ENCODE measurements at regions of chr12 and their contacts with region 1.

Region 1: GRCh38 chr12:67315661-67316060 is 46.5 kb downstream of the CAND1 start:
- DNase-seq: no peak
- H3K4me3 ChIP-seq: no peak overlapping the region
- H3K4me3 Mint-ChIP-seq: no peak overlapping the region
- H3K27ac ChIP-seq: no peak overlapping the region
- H3K27ac Mint-ChIP-seq: peak overlapping the region in 1 of 8 donors; percentile 43
- H3K4me1 ChIP-seq: no peaks in the 10 kb centered on the region
- H3K4me1 Mint-ChIP-seq: peaks cover 7 to 22% (median 19%) of the 10 kb centered on the region in 3 donors
- H3K27me3 ChIP-seq: no peaks in the 10 kb centered on the region
- H3K27me3 Mint-ChIP-seq: no peaks in the 10 kb centered on the region

Region 2: DNA sequence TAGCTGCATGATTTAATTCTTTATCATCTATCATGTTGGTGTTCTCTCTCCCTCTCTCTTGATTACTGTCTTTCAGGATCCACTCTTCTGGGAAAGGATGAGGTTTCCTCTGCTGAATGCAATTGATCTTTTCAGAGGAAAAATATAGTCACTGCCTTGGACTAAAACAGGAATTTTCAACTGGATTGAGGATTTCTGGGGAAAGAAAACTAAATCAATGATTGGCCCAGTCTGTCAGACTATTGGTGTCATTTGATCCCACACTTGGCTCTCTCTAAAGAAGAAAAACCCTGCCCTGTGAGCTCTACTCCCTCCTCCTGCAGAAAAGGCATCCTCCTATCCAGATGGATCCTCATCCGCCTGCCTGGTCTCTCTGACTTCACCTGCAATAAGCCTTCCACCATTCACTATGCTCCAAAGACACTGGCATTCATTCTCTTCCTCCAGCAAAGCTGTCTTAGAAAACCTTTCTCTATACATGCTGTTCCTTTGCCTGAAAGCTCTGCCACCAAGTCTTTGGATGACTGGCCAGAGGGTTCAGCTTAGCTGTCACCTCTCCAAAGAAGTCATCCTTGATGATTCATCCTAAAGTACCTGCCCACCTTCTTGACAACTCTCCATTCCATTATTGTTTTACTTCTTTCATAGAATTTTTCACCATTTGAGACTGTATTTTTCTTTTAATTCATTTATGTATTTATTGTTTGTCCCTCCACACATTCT is 174.2 kb before region 1 on chr12:
- CTCF ChIA-PET with region 1: no interaction called
- POLR2A ChIA-PET with region 1: no interaction called
- DNase-seq: no peak
- H3K4me3 ChIP-seq: no peak overlapping the region
- H3K4me3 Mint-ChIP-seq: no peak overlapping the region
- H3K27ac ChIP-seq: no peak overlapping the region
- H3K27ac Mint-ChIP-seq: peak overlapping the region in 1 of 8 donors; percentile 33
- H3K4me1 ChIP-seq: no peaks in the 10 kb centered on the region
- H3K4me1 Mint-ChIP-seq: no peaks in the 10 kb centered on the region
- H3K27me3 ChIP-seq: no peaks in the 10 kb centered on the region
- H3K27me3 Mint-ChIP-seq: peaks cover 10 to 26% of the 10 kb centered on the region in 2 donors

Region 3: GRCh38 chr12:68007466-68007865 is 691.8 kb after region 1 on chr12:
- CTCF ChIA-PET with region 1: no interaction called
- POLR2A ChIA-PET with region 1: interaction called, 12 read pairs
- DNase-seq: no peak
- H3K4me3 ChIP-seq: no peak overlapping the region
- H3K4me3 Mint-ChIP-seq: no peak overlapping the region
- H3K27ac ChIP-seq: no peak overlapping the region
- H3K27ac Mint-ChIP-seq: peak overlapping the region in 2 of 8 donors; percentile 11 to 40
- H3K4me1 ChIP-seq: peaks cover 11% of the 10 kb centered on the region
- H3K4me1 Mint-ChIP-seq: peaks cover 40 to 54% (median 48%) of the 10 kb centered on the region in 3 donors
- H3K27me3 ChIP-seq: no peaks in the 10 kb centered on the region
- H3K27me3 Mint-ChIP-seq: no peaks in the 10 kb centered on the region

Measured in CD8-positive, alpha-beta memory T cell (primary cell).